ENCODE measurements at regions of chr14 and their contacts with region 1.

Region 1: DNA sequence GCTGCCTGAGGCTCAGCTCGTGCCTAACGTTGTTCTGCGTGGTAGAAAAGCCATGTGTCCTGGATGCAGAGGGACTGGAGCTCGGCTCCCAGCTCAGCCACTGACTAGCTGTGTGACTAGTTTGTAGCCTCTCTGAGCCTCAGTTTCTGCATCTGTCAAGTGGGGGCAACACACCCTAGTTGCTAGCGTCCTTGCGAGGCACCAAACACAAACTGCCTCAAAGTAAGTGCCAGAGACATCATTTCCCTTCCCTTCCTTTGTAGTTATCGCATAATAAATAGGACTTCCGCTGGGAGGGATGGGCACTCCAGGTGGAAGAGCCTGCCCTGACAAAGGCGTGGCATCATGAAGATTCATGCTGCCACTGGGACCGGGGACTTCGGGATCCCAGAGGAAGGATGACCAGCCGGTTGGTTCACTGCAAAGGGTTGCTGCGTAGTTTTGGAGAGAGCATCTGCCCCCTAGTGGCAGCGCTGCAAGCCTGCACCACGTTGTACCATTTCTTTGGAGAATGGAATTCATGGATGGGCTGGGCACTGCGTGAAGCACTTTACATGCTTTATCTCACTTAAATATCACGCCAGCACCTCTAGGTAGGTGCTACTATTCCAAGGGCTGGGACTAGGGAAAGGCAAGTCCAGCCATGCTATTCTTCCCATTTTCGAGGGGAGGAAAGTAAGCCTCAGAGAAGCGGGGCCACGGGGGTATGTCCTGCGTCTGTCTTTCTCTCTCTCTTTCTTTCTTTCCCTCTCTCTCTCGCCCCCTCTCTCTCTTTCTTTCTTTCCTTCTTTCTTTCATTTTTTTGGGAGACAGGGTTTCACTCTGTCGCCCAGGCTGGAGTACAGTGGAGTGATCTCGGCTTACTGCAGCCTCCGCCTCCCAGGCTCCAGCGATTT is 4.6 kb downstream of the CCDC197 start:
- DNase-seq: peak; percentile 67
- H3K4me3 Mint-ChIP-seq: no peak overlapping the region
- H3K27ac Mint-ChIP-seq: peak overlapping the region; percentile 66
- H3K4me1 Mint-ChIP-seq: peaks cover 48% of the 10 kb centered on the region
- H3K27me3 Mint-ChIP-seq: peaks cover 13% of the 10 kb centered on the region

Region 2: DNA sequence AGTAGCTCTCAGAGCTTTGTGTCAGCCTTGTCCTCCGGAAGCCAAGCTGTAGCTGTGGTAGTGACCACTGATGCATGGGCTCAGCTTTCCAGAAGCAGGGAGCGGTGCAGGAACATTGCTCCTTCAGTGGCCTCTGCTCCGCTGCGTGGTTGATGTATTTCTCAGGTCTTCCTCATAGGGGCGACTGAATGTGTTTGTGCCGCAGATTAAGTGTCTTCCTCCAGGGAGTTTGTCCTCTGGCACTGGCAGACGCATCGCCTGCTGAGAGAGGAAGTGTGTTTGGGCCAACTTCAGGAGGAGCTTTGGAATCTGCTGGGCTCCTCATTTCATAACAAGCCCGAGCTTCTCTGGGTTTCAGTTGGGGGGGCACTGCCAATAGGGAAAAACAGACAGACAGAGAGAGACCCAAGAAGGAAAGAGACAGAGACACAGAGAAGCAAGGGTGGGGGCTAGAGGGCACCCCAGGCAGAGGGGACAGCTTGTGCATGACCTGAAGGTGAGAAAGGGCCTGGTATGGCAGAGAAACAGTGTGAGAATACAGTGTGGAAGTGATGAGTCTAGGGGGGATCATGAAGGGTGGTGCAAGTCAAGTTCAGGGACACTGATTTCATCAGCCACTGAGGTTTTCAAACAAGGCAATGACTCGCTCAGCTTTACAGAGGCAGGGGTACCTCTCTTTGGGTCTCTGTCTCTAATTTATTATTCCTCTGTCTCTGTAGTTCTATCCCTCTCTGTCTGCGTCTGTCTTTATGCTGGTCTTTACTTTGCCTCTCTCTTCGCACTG is 144.1 kb before region 1 on chr14:
- CTCF ChIA-PET with region 1: no interaction called
- DNase-seq: no peak
- H3K4me3 Mint-ChIP-seq: no peak overlapping the region
- H3K27ac Mint-ChIP-seq: no peak overlapping the region
- H3K4me1 Mint-ChIP-seq: no peaks in the 10 kb centered on the region
- H3K27me3 Mint-ChIP-seq: peaks cover 20% of the 10 kb centered on the region

Region 3: DNA sequence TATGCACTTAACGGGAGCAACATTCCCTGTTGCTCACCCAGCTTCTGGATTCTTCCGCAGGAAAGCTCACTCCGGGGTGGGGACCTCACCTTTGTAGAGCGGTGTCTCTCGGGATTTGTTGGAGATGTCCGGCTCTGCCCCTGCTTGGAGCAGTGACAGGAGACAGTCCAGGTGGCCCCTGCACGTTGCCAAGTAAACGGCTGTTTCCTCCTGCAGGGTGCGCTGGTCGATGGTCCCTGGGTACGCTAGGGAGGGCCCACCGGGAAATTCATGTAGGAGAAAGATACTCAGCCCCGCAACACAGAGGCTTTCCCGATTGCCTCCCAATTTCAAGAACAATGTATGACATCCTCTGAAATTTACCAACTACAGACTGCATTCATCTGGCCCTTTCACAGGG is 48.5 kb before region 1 on chr14:
- CTCF ChIA-PET with region 1: interaction called, 10 read pairs
- DNase-seq: no peak
- H3K4me3 Mint-ChIP-seq: no peak overlapping the region
- H3K27ac Mint-ChIP-seq: no peak overlapping the region
- H3K4me1 Mint-ChIP-seq: peaks cover 72% of the 10 kb centered on the region
- H3K27me3 Mint-ChIP-seq: peaks cover 4% of the 10 kb centered on the region

Region 4: GRCh38 chr14:93970549-93970946 is 31.2 kb before region 1 on chr14:
- CTCF ChIA-PET with region 1: interaction called, 57 read pairs
- DNase-seq: peak; percentile 78
- H3K4me3 Mint-ChIP-seq: peak overlapping the region; percentile 78
- H3K27ac Mint-ChIP-seq: peak overlapping the region; percentile 97
- H3K4me1 Mint-ChIP-seq: peaks cover 98% of the 10 kb centered on the region
- H3K27me3 Mint-ChIP-seq: no peaks in the 10 kb centered on the region

Region 5: GRCh38 chr14:93975791-93976476 is 25.8 kb before region 1 on chr14:
- CTCF ChIA-PET with region 1: interaction called, 57 read pairs
- DNase-seq: peak; percentile 42
- H3K4me3 Mint-ChIP-seq: peak overlapping the region; percentile 79
- H3K27ac Mint-ChIP-seq: peak overlapping the region; percentile 95
- H3K4me1 Mint-ChIP-seq: peaks cover 94% of the 10 kb centered on the region
- H3K27me3 Mint-ChIP-seq: no peaks in the 10 kb centered on the region

Region 6: DNA sequence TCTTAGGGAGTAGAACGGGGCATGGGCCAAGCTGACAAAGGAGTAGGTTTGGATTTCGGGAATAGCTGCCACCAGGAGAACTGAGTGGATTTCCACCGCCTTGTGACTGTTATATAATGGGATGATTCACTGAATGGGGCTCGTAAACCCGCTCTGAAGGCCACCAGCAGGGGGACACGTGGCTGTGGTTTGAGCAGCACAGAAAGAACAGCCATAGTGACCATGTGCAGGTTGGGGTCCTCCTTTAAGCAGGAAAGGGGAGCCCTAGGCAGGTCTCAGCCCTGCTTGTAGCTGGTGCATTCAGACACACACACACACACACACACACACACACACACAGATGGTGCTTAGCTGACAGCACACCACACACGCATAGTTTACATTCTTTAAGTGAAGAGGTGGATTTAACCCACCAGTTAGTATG is 16.8 kb before region 1 on chr14:
- CTCF ChIA-PET with region 1: interaction called, 21 read pairs
- DNase-seq: no peak
- H3K4me3 Mint-ChIP-seq: no peak overlapping the region
- H3K27ac Mint-ChIP-seq: no peak overlapping the region
- H3K4me1 Mint-ChIP-seq: peaks cover 15% of the 10 kb centered on the region
- H3K27me3 Mint-ChIP-seq: no peaks in the 10 kb centered on the region

Region 7: GRCh38 chr14:93991212-93991611 is 10.5 kb before region 1 on chr14:
- CTCF ChIA-PET with region 1: interaction called, 21 read pairs
- DNase-seq: no peak
- H3K4me3 Mint-ChIP-seq: no peak overlapping the region
- H3K27ac Mint-ChIP-seq: no peak overlapping the region
- H3K4me1 Mint-ChIP-seq: peaks cover 14% of the 10 kb centered on the region
- H3K27me3 Mint-ChIP-seq: peaks cover 37% of the 10 kb centered on the region

Region 8: GRCh38 chr14:94021001-94021400 is 19.3 kb after region 1 on chr14:
- CTCF ChIA-PET with region 1: interaction called, 16 read pairs
- DNase-seq: no peak
- H3K4me3 Mint-ChIP-seq: no peak overlapping the region
- H3K27ac Mint-ChIP-seq: no peak overlapping the region
- H3K4me1 Mint-ChIP-seq: peaks cover 48% of the 10 kb centered on the region
- H3K27me3 Mint-ChIP-seq: peaks cover 61% of the 10 kb centered on the region

Measured in activated naive CD4-positive, alpha-beta T cell treated with anti-CD3 and anti-CD28 coated beads, Interleukin-2, amount 10 ng/mL, durations not matched to agents 7 days and 5 days (primary cell).